ENCODE measurements at regions of chr3 and their contacts with region 1.

Region 1: GRCh38 chr3:129120254-129121004 is 1.2 kb downstream of the RAB43 start:
- DNase-seq: peak; percentile 90
- H3K4me3 Mint-ChIP-seq: peak overlapping the region; percentile 94
- H3K27ac Mint-ChIP-seq: peak overlapping the region; percentile 99
- H3K4me1 Mint-ChIP-seq: peaks cover 61% of the 10 kb centered on the region
- H3K27me3 Mint-ChIP-seq: no peaks in the 10 kb centered on the region

Region 2: GRCh38 chr3:128804017-128804810 is 316.2 kb before region 1 on chr3:
- intact Hi-C with region 1: loop called (anchors 5 kb)
- DNase-seq: peak; percentile 77
- H3K4me3 Mint-ChIP-seq: peak overlapping the region; percentile 66
- H3K27ac Mint-ChIP-seq: peak overlapping the region; percentile 95
- H3K4me1 Mint-ChIP-seq: peaks cover 82% of the 10 kb centered on the region
- H3K27me3 Mint-ChIP-seq: no peaks in the 10 kb centered on the region

Region 3: GRCh38 chr3:129016356-129016719 is 104.1 kb before region 1 on chr3:
- intact Hi-C with region 1: no loop called
- DNase-seq: peak; percentile 31
- H3K4me3 Mint-ChIP-seq: peak overlapping the region; percentile 71
- H3K27ac Mint-ChIP-seq: peak overlapping the region; percentile 91
- H3K4me1 Mint-ChIP-seq: peaks cover 46% of the 10 kb centered on the region
- H3K27me3 Mint-ChIP-seq: peaks cover 2% of the 10 kb centered on the region

Region 4: DNA sequence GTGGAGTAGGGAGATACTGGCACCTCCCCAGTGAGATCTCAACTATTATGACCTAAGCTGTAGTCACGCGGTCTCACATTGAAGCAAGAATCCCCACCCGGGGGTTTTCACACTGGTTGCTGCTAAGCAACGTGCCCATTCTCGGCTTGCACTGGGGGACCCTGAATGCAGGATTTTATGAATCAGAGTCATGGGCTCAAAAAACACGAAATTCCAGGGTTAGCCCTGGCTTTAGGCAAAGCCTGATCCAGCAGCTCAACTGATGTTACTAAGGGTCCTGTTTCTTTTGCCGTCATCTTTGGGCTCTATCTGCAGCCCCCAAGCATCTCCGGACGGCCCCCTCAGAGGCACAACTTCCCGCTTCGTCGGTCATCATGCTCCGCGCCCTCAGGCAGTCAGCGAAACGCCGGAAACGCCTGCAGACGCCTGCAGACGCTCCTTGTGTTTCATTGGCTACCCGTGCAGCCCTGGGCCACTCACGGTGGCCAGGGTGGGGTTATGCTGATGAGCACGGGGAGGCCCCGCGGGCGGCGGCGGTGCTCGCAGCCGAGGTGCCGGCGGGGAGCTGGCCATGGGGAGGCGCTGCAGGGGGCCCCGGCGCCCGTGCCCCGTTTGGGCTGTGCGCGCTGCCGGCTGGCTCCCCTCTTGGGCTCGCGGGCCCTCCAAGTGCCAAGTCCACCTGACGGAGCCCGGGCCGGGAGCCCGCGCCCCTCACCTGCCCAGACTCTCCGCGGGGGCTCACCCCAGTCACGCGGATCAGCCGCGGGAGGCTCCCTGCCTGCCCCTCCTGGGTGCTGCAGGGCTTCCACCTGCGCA is 93.5 kb before region 1 on chr3:
- intact Hi-C with region 1: loop called (anchors 1 kb)
- DNase-seq: peak; percentile 93
- H3K4me3 Mint-ChIP-seq: peak overlapping the region; percentile 80
- H3K27ac Mint-ChIP-seq: peak overlapping the region; percentile 87
- H3K4me1 Mint-ChIP-seq: peaks cover 24% of the 10 kb centered on the region
- H3K27me3 Mint-ChIP-seq: peaks cover 13% of the 10 kb centered on the region

Region 5: GRCh38 chr3:129101370-129102138 is 18.9 kb before region 1 on chr3:
- intact Hi-C with region 1: loop called (anchors 2 kb)
- DNase-seq: no peak
- H3K4me3 Mint-ChIP-seq: no peak overlapping the region
- H3K27ac Mint-ChIP-seq: peak overlapping the region; percentile 49
- H3K4me1 Mint-ChIP-seq: peaks cover 37% of the 10 kb centered on the region
- H3K27me3 Mint-ChIP-seq: no peaks in the 10 kb centered on the region

Region 6: DNA sequence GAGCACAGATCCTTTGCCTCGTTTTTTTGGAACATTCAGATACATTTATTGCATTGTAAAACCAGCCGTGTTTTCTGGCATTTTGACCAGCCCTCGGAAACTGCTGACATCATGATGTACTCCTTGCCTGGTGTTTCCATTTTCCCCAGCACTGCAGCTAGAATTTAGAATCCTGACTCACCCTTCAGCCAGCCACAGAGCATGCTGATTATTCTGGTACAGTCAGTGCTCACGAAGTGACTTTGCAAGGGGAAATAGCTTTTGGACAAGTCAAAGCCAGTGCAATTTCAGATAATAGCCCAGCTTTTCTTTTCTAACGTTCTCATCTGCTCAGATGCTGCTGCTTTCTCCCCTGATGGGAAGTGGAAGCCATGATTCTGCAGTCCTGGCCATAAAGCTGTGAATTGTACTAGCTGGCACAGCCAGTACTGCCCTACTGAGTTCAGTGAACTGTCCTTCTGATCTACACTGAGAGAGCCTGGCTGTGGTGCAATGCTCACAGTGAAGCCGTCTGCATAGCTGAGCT is 75.4 kb after region 1 on chr3:
- intact Hi-C with region 1: no loop called
- DNase-seq: no peak
- H3K4me3 Mint-ChIP-seq: no peak overlapping the region
- H3K27ac Mint-ChIP-seq: no peak overlapping the region
- H3K4me1 Mint-ChIP-seq: peaks cover 20% of the 10 kb centered on the region
- H3K27me3 Mint-ChIP-seq: no peaks in the 10 kb centered on the region

Region 7: DNA sequence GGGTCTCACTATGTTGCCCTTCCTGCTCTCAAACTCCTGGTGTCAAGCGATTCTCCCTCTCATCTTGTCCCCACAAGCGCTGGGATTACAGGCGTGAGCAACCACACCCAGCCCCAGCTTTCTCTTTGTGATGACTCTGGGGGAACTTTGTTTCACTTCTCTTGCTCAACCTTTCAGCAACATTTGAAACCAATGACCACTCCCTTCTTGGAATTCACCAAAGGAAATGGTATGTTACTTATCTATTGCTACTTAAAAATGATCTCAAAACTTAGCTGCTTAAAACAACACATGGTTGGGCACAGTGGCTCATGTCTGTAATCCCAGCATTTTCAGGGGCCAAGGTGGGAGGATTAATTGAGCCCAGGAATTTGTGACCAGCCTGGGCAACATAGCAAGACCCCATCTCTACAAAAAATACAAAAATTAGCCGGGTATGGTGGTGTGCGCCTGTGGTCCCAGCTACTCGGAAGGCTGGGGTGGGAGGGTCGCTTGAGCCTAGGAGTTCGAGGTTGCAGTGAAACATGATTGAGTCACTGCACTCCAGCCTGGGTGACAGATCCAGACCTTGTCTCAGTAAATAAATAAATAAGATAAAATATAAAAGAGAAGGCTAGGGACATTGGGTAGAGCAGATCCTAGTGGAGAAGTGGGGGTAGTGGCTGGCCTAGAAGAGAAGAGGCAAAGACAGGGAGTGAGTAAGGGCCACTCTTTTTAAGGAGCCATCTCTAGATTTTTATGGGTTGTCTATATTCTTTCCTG is 118.7 kb after region 1 on chr3:
- intact Hi-C with region 1: loop called (anchors 2 kb)
- DNase-seq: peak; percentile 58
- H3K4me3 Mint-ChIP-seq: peak overlapping the region; percentile 41
- H3K27ac Mint-ChIP-seq: peak overlapping the region; percentile 90
- H3K4me1 Mint-ChIP-seq: peaks cover 43% of the 10 kb centered on the region
- H3K27me3 Mint-ChIP-seq: no peaks in the 10 kb centered on the region

Region 8: DNA sequence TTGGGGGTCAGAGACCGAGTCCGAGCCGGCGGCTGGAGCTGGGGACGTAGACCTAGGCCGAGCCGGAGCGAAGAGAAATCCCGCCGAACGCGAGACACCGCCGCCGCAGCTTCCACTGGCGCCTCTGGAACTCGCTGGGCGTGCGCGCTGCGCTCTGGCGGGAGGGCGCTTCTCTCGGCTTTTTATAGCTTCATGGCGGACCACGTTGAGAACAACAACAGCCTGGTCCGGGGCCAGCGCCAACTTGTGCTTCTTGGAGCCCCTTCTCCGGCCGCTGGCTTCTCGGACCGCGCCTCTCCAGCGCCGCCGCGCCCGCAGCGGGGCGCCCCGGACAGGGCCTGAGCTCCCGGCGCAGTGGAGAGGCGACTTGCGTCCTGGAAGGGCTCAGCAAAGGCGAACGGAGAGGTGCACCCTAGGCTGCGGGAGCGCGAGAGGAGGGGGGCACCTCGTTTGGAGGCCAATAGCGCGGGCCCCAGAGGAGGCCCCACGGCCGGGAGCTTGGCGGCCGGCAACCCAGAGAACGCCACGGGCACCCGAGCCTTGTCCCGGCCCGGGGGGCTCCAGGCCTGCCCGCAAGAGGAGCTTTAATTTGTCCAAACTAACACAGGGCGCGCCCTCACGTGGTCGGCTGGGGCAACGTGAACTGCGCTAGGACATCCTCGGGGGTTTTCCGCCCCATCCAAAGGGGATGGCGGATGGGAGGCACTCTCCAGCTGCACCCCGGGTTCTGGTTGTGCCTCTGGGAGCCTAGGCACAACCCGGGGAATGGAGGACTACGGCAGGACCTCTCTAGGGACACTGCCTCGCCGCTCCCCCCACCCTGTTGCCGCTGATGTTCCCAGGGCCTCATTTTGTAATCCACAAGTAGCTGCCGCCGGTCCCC is 195.9 kb after region 1 on chr3:
- intact Hi-C with region 1: loop called (anchors 2 kb)
- DNase-seq: peak; percentile 88
- H3K4me3 Mint-ChIP-seq: peak overlapping the region; percentile 81
- H3K27ac Mint-ChIP-seq: peak overlapping the region; percentile 80
- H3K4me1 Mint-ChIP-seq: peaks cover 32% of the 10 kb centered on the region
- H3K27me3 Mint-ChIP-seq: no peaks in the 10 kb centered on the region